Dorsolateral prefrontal cortex (tissue), 120 donors: ENCODE measurements at regions of chr21 and their contacts with region 1.

Region 1: GRCh38 chr21:42117229-42117966 is 46.3 kb downstream of the UMODL1 start:
- DNase-seq: peak; percentile 69 to 87 (median 82)
- H3K4me3 ChIP-seq: peak overlapping the region in 38 of 59 donors; percentile 5 to 57 (median 28)
- H3K27ac ChIP-seq: peak overlapping the region in 8 of 59 donors; percentile 10 to 39 (median 27)
- H3K27me3 ChIP-seq: no peaks in the 10 kb centered on the region
- CTCF ChIP-seq: peak; percentile 92 to 99 (median 97)

Region 2: DNA sequence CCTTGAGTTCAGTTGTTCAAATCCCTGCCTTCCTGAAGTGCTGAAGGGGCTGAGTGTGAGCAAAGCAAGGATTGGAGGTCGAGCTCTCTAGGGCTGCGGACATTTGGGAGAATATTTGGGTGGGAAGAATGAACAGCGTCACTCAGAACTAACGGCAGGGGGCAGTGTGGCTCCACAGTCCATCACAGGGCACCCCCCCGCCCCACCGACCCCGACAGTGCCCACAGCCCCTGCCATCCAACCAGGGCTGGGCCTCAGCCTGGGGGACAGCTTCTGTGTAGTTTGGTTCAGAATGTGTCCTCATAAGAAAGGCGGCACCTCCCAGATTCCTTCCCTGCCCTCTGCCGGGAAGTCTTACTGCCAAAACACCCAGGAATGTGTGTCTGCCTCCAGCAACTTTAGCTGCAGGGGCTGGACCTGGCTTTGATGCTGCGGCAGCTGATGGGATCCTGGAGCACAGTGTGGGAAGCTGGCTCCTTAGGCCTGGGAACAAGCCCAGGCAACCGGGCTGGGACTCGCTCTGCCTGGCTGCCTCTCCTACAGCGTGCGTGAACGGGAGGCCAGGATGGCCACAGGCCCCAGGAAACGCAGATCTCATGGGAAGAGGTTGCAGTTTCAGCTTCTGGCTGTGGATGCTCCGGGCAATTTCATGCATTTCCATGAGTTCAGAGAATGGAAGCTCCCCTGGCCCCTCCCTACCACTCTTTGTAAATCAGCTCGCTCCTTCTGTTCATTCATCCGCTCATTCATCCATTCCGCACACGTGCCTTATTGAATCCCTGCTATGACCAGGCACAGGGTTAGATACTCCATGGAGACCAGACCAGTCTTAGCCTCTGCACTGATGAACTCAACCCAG is 504.5 kb before region 1 on chr21:
- intact Hi-C with region 1: loop called in 1 of 2 experiments (anchors 2 kb)
- DNase-seq: peak in 9 of 10 donors; percentile 16 to 69 (median 54)
- H3K4me3 ChIP-seq: peak overlapping the region in 16 of 59 donors; percentile 0 to 39 (median 14)
- H3K27ac ChIP-seq: peak overlapping the region in 21 of 59 donors; percentile 2 to 58 (median 17)
- H3K27me3 ChIP-seq: peaks cover 0 to 9% (median 0%) of the 10 kb centered on the region in 45 donors
- CTCF ChIP-seq: peak; percentile 65 to 94 (median 84)

Region 3: GRCh38 chr21:41879190-41879998 is 238.0 kb before region 1 on chr21 and contains the start of gene PRDM15:
- intact Hi-C with region 1: loop called (anchors 5 to 10 kb)
- DNase-seq: peak; percentile 69 to 88 (median 78)
- H3K4me3 ChIP-seq: peak within 1 kb of the TSS; percentile 60 to 95 (median 83)
- H3K27ac ChIP-seq: peak within 1 kb of the TSS in 55 of 59 donors; percentile 32 to 92 (median 80)
- H3K27me3 ChIP-seq: no peaks in the 10 kb centered on the region
- CTCF ChIP-seq: peak in 1 of 56 donors; percentile 4
- total RNA-seq, gene PRDM15: 6.7 to 20.0 (median 11.0) TPM

Region 4: GRCh38 chr21:41953831-41954653 is 163.4 kb before region 1 on chr21 and contains the start of gene C2CD2:
- intact Hi-C with region 1: loop called in 1 of 2 experiments (anchors 5 kb)
- DNase-seq: no peak
- H3K4me3 ChIP-seq: peak within 1 kb of the TSS; percentile 37 to 80 (median 70)
- H3K27ac ChIP-seq: peak within 1 kb of the TSS in 51 of 59 donors; percentile 7 to 82 (median 63)
- H3K27me3 ChIP-seq: no peaks in the 10 kb centered on the region
- CTCF ChIP-seq: no peak
- total RNA-seq, gene C2CD2: 19.9 to 80.8 (median 42.7) TPM

Region 5: DNA sequence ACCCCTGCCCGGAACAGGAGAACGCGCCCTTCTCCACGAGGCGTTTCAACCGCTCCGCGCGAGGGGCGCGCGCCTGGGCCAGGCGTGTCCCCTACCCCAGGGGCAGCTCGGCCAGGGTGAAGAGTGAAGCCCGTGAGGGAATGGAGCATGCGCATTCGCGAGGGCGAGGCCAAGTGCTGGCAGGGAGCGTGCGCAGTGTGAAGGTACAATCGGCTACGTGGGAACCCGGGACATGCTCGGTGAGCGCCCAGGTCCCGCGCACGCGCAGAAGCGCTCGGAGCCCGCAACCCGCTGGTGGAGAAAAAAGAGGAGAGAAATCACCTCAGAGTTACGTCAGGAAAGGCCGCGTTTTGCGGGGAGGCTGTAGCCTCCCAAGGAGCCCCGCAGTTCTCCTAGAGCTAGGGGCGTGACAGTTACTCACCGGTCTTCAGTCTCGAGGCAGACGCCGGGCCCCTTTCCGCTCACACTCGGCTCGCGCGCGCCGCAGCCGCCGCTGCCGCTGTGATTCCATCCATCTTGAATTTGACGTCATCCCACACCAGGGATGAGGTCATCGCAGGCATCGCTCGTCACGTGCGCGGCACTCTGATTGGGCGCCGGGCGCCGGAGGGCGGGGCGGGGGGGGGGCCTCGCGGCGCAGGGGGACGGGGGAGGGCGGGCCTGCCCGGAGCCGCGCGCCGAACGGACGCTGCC is 107.4 kb before region 1 on chr21 and contains the start of gene ZBTB21:
- intact Hi-C with region 1: loop called (anchors 2 to 5 kb)
- DNase-seq: peak; percentile 94 to 98 (median 95)
- H3K4me3 ChIP-seq: peak within 1 kb of the TSS; percentile 67 to 99 (median 90)
- H3K27ac ChIP-seq: peak within 1 kb of the TSS; percentile 88 to 100 (median 99)
- H3K27me3 ChIP-seq: no peaks in the 10 kb centered on the region
- CTCF ChIP-seq: peak in 5 of 56 donors; percentile 4 to 13 (median 6)
- total RNA-seq, gene ZBTB21: 17.2 to 47.7 (median 24.6) TPM

Region 6: GRCh38 chr21:42135386-42136052 is 18.1 kb after region 1 on chr21:
- intact Hi-C with region 1: no loop called
- DNase-seq: no peak
- H3K4me3 ChIP-seq: no peak overlapping the region
- H3K27ac ChIP-seq: no peak overlapping the region
- H3K27me3 ChIP-seq: no peaks in the 10 kb centered on the region
- CTCF ChIP-seq: no peak